Activated CD4-positive, alpha-beta memory T cell treated with anti-CD3 and anti-CD28 coated beads, Interleukin-2, amount 10 ng/mL, durations not matched to agents 7 days and 5 days (primary cell): ENCODE measurements at regions of chr2 and their contacts with region 1.

Region 1: GRCh38 chr2:68467077-68467960 is at the starts of genes APLF and FBXO48:
- DNase-seq: peak; percentile 98
- H3K4me3 Mint-ChIP-seq: peak within 1 kb of the TSS; percentile 96
- H3K27ac Mint-ChIP-seq: peak within 1 kb of the TSS; percentile 95
- H3K4me1 Mint-ChIP-seq: peaks cover 47% of the 10 kb centered on the region
- H3K27me3 Mint-ChIP-seq: no peaks in the 10 kb centered on the region
- total RNA-seq, gene APLF: 2.8 to 3.6 TPM
- total RNA-seq, gene FBXO48: 5.0 to 5.4 TPM

Region 2: DNA sequence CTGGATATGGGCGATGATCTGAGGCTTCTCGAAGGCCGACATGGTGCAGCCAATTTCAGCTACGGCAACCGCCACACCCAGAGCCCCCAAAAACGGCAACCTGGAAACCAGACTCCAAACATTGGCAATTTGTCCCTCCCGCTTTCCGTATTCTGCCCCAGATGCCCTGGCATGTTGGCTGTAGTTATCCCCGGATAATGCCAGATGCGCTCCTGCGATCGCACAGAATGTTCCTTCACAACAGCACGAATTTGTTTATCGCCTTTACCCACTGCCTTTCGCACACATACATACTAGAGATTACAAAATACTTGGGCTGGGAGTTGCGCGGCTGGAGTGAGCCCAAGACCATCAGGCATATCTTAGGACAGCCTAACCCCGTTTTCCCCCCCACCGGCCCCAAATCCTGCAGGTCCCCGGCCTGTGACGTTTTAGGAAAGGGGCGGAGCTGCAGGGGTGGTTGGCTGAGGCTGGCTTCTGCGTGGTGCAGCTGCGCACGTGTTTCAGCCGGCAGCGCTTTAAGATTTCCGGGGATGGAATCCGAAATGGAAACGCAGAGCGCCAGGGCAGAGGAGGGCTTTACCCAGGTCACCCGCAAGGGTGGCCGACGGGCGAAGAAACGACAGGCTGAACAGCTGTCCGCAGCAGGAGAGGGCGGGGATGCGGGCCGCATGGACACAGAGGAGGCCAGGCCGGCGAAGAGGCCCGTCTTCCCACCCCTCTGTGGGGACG is 309.8 kb before region 1 on chr2 and contains the start of gene PNO1:
- CTCF ChIA-PET with region 1: interaction called, 3 read pairs
- POLR2A ChIA-PET with region 1: interaction called, 14 read pairs
- DNase-seq: peak; percentile 97
- H3K4me3 Mint-ChIP-seq: peak within 1 kb of the TSS; percentile 94
- H3K27ac Mint-ChIP-seq: peak within 1 kb of the TSS; percentile 97
- H3K4me1 Mint-ChIP-seq: peaks cover 42% of the 10 kb centered on the region
- H3K27me3 Mint-ChIP-seq: no peaks in the 10 kb centered on the region
- total RNA-seq, gene PNO1: 8.0 to 8.5 TPM

Region 3: DNA sequence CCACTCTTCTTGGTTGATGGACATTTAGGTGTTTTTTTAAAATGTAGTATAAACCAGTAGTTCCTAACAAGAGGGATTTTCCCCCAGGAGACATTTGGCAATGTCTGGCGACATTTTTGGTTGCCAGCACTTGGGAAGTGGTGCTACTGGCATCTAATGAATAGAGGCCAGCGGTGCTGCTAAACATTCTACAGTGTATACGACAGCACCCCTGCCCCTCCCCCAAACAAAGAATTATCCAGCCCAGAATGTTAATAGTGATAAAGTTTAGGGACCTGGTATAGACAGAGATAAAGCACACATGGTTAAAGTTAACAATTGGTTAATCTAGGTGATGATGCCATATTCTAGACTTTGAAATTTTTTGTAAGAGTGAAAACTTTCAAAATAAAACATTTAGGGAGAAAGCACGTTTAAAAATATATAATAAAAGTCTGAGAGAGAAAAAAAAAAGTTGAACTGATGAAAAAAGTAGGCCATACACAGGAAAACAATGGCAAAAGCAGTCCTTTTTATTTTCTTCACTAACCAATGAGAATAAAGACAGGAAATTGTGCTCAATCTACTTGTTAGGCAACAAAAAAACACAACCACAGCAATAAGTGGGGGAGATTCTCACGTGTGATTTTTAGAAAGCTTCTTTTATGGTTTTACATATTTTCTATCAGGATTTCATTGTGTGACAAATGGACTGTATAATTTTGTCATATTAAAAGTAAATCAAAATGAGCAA is 15.0 kb before region 1 on chr2:
- CTCF ChIA-PET with region 1: interaction called, 10 read pairs
- POLR2A ChIA-PET with region 1: interaction called, 6 read pairs
- DNase-seq: no peak
- H3K4me3 Mint-ChIP-seq: no peak overlapping the region
- H3K27ac Mint-ChIP-seq: no peak overlapping the region
- H3K4me1 Mint-ChIP-seq: peaks cover 5% of the 10 kb centered on the region
- H3K27me3 Mint-ChIP-seq: no peaks in the 10 kb centered on the region

Region 4: GRCh38 chr2:68715353-68716041 is 248.2 kb after region 1 on chr2:
- CTCF ChIA-PET with region 1: interaction called, 23 read pairs
- POLR2A ChIA-PET with region 1: interaction called, 11 read pairs
- DNase-seq: peak; percentile 58
- H3K4me3 Mint-ChIP-seq: no peak overlapping the region
- H3K27ac Mint-ChIP-seq: peak overlapping the region; percentile 89
- H3K4me1 Mint-ChIP-seq: peaks cover 85% of the 10 kb centered on the region
- H3K27me3 Mint-ChIP-seq: peaks cover 1% of the 10 kb centered on the region

Region 5: DNA sequence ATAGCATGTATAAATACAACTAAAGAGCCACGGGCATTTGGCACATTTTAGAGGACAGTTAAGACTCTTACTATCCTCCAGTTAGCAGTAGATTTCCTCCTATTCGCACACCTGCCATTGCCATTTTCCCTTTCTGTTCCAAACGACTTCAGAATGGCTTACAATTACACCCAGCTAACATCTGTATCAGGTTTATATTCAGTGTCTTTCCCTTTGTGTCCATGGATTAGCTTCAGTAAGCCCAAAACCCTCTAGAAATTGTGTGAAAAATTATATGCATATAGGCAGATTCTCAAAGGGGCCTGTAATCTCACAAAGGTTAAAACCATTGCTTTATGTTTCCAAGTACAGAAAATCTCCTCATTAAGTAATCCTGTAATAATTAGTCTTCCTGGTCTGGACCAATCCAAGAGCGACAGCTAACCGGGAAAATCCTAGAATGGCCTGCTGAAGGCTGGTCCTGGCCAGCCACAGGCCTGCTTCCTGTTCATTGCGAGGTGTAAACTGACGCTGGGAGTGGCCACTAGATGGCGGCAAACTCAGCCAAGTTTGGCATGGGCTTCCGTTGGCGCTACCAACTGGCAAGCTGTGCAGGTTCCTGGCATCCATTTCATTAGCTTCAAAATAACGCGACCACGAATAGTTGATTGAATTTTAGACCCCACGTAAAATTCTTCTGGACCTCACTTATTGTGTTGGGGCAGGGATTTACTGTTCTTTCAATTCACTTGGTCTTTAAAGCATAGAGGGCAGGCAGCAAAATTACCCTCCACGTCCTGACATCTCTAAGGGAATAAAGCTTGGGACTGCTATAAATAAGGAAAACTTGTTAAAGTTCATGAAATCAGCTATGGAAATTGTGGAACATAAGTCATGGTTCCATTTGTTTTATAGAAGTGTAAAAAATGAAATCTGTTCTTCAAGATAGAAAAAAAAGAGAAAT is 284.3 kb after region 1 on chr2:
- CTCF ChIA-PET with region 1: interaction called, 15 read pairs
- POLR2A ChIA-PET with region 1: interaction called, 10 read pairs
- DNase-seq: peak; percentile 93
- H3K4me3 Mint-ChIP-seq: peak overlapping the region; percentile 11
- H3K27ac Mint-ChIP-seq: peak overlapping the region; percentile 77
- H3K4me1 Mint-ChIP-seq: peaks cover 92% of the 10 kb centered on the region
- H3K27me3 Mint-ChIP-seq: no peaks in the 10 kb centered on the region

Region 6: DNA sequence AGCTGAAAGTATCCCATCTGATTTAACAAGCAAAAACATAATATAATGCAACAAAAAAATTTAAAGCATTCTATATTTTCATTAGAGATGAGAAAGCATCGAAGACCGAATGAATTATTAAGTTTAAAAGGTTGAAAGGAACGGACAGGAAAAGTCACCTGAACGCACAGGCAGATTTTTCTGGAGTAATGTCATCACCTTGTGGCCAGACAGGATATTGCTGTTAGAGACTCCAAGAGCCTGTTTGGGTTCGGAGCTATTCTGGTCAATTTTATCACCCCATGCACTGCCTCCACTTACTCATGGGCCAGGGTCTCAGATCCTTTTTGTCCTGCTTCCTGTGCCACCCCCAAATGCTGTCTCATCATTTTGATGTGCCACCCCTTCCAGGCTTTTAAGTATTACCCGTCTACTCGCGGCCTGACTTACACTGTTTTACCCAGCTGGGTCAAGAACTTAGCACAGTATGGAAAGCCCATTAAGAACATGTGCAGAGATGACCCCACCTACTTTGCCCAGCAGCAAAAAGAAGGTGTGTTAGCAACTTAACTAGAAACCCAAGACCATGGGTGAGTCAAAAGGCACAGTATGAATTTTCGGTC is 458.1 kb after region 1 on chr2:
- CTCF ChIA-PET with region 1: interaction called, 75 read pairs
- POLR2A ChIA-PET with region 1: interaction called, 5 read pairs
- DNase-seq: peak; percentile 64
- H3K4me3 Mint-ChIP-seq: no peak overlapping the region
- H3K27ac Mint-ChIP-seq: no peak overlapping the region
- H3K4me1 Mint-ChIP-seq: peaks cover 9% of the 10 kb centered on the region
- H3K27me3 Mint-ChIP-seq: peaks cover 24% of the 10 kb centered on the region